Right ventricle myocardium inferior (tissue), 1 donor: ENCODE measurements at regions of chr15 and their contacts with region 1.

Region 1: DNA sequence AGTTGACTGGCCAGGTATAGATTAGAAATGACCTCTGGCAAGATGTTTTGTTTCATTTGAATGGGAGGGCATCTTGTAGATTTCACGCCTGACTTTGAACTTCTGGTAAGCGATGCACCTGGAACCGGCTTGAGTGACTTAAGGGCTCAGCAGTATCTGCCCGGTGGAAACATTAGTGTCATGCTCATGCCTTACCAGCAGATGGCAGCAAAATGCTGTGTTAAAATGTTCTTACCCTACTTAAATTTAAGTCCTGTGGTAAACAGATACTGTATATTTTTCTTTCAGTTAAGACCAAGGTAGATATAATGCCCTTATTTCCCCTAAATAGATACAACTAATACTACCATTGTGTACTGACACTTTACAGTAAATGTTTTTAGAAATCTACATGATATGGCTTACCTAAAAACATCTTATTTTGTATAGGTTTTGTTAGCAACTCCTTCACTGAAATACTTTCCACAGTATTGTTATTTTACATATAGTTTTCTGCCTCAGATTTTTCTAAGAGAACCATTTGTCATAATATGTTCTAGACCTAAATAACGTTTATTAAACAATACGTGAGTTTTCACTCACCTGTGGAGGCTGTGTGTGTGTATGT is 25.5 kb downstream of the ASB7 start:
- DNase-seq: no peak
- ATAC-seq: peak; percentile 79

Region 2: DNA sequence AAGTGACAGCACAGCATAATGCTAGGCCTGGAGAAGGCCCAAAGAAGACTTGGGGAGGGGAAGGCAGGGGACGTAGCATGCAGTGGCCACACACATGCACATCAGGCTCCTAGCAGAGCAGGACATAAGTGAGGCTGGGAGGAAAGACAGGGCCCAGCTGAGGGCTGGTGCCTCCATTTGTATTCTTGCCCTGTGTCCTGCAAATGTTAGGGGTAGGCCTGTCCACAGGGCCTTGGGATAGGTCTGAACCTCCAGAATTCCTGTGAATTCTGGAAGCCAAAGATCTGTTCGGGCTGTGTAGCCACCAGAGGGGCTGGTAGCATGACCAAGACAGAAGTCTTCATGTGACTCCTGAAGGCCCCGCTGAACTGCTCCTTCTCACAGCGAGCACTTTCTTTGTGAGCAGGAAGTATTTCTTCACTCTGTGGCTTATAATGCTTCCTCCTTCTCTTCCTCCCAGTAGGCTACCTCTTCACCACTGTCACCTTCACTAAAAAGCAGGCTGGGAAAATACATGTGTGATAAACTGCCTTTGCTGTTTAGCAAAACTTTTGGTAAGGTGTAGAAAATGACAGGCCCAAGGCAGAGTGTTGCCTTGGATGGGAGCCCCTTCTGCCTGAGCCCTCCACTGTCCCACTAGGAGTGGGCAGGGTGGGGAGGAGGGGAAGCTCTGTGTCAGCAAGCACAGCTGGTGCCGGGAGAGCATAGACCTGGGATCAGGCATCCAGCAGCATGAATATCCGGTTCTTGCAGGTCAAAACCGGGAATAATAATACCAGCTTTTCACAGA is 107.6 kb before region 1 on chr15:
- intact Hi-C with region 1: no loop called
- DNase-seq: no peak
- ATAC-seq: peak; percentile 56

Region 3: GRCh38 chr15:100703032-100703578 is 75.2 kb after region 1 on chr15:
- intact Hi-C with region 1: no loop called
- DNase-seq: no peak
- ATAC-seq: no peak

Region 4: GRCh38 chr15:100873029-100873677 is 245.3 kb after region 1 on chr15:
- intact Hi-C with region 1: loop called (anchors 1 kb)
- DNase-seq: no peak
- ATAC-seq: peak; percentile 62

Region 5: GRCh38 chr15:101269479-101270223 is 641.8 kb after region 1 on chr15:
- intact Hi-C with region 1: loop called (anchors 5 kb)
- DNase-seq: no peak
- ATAC-seq: peak; percentile 51